Motor neuron (in vitro differentiated cells): ENCODE measurements at regions of chr1 and their contacts with region 1.

Region 1: GRCh38 chr1:174743654-174744561 is 255.8 kb upstream of the CACYBP start:
- ATAC-seq: peak in 2 of 8 experiments; percentile 14 to 54
- H3K4me3 ChIP-seq: no peak overlapping the region
- H3K27ac ChIP-seq: no peak overlapping the region
- H3K4me1 ChIP-seq: no peaks in the 10 kb centered on the region

Region 2: GRCh38 chr1:174262349-174263241 is 481.3 kb before region 1 on chr1:
- in situ Hi-C with region 1: loop called in 5 of 9 experiments (anchors 10 to 25 kb)
- ATAC-seq: peak; percentile 71 to 90 (median 76)
- H3K4me3 ChIP-seq: no peak overlapping the region
- H3K27ac ChIP-seq: no peak overlapping the region
- H3K4me1 ChIP-seq: peaks cover 0 to 2% of the 10 kb centered on the region in 2 donors

Region 3: GRCh38 chr1:174276087-174276486 is 467.8 kb before region 1 on chr1:
- in situ Hi-C with region 1: loop called in 4 of 9 experiments (anchors 25 kb)
- ATAC-seq: no peak
- H3K4me3 ChIP-seq: no peak overlapping the region
- H3K27ac ChIP-seq: no peak overlapping the region
- H3K4me1 ChIP-seq: no peaks in the 10 kb centered on the region

Region 4: GRCh38 chr1:174413632-174414031 is 330.3 kb before region 1 on chr1:
- in situ Hi-C with region 1: loop called in 1 of 9 experiments (anchors 25 kb)
- ATAC-seq: peak in 2 of 8 experiments; percentile 59 to 85
- H3K4me3 ChIP-seq: no peak overlapping the region
- H3K27ac ChIP-seq: no peak overlapping the region
- H3K4me1 ChIP-seq: no peaks in the 10 kb centered on the region

Region 5: DNA sequence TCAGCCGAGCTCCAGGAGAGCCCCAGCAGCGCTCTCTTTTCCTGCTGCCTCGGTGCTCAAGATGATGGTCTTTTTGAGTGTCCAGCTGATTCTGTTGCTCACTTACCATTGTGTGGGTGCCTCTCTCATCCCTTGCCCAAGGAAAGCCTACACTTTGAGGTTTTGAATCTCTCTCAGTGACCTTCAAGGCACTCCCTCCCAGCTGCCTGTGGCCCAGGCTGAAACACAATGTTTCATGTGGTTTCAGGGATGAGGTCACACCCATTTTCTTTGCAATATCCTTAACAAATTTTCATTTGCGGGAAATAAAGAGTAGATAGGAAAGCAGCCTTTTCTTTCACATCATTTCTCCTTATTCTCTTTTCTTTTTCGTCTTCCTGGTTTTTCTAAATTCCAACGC is 292.0 kb after region 1 on chr1:
- in situ Hi-C with region 1: no loop called
- ATAC-seq: peak in 2 of 8 experiments; percentile 75 to 86
- H3K4me3 ChIP-seq: no peak overlapping the region
- H3K27ac ChIP-seq: no peak overlapping the region
- H3K4me1 ChIP-seq: no peaks in the 10 kb centered on the region